ENCODE measurements at regions of chr16 and their contacts with region 1.

Region 1: DNA sequence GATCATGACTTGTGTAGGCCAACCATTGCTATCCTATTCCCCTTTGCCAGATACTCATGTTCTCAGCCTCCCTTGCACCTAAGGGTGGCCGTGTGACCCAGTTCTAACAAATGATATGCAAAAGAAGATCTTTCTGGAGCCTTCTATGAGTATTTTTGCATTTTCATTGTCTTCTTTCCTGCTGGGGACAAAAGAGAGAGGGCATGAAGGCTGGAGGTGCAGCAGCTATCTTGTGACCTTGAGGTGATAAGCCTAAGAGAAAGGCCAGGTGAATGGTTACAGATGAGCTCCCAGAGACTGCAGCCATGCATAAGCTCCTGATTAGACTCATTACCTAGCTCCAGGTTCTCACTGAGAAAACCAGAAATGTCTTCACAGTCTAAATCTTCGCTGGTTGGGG is 38.8 kb upstream of the PRKCB start:
- DNase-seq: no peak
- H3K4me3 Mint-ChIP-seq: no peak overlapping the region
- H3K27ac Mint-ChIP-seq: no peak overlapping the region
- H3K4me1 Mint-ChIP-seq: no peaks in the 10 kb centered on the region
- H3K27me3 Mint-ChIP-seq: no peaks in the 10 kb centered on the region

Region 2: DNA sequence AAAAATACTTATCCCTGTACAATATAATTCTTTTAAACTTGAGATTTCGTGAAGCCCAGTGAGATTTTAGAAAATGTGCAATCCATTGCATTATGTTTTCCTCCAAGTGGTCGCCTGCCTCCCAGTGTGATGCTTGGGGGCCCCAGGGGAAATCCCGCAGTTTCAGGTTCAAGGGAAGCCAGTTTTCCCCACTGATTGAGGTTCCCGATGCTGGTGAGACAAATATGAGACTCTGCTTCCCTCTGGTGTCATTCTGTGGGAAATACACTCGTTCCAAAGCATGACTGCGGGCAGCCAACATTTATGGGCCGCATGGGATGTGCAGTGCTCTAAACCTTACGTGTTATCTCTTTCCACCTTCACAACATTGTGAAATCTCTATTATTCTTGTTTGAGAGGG is 239.7 kb after region 1 on chr16:
- CTCF ChIA-PET with region 1: interaction called, 128 read pairs
- intact Hi-C with region 1: no loop called
- DNase-seq: peak; percentile 56
- H3K4me3 Mint-ChIP-seq: no peak overlapping the region
- H3K27ac Mint-ChIP-seq: no peak overlapping the region
- H3K4me1 Mint-ChIP-seq: peaks cover 22% of the 10 kb centered on the region
- H3K27me3 Mint-ChIP-seq: no peaks in the 10 kb centered on the region

Region 3: GRCh38 chr16:24497406-24497805 is 700.5 kb after region 1 on chr16:
- CTCF ChIA-PET with region 1: no interaction called
- intact Hi-C with region 1: no loop called
- DNase-seq: no peak
- H3K4me3 Mint-ChIP-seq: no peak overlapping the region
- H3K27ac Mint-ChIP-seq: no peak overlapping the region
- H3K4me1 Mint-ChIP-seq: no peaks in the 10 kb centered on the region
- H3K27me3 Mint-ChIP-seq: peaks cover 5% of the 10 kb centered on the region